ENCODE measurements at regions of chr10 and their contacts with region 1.

Region 1: DNA sequence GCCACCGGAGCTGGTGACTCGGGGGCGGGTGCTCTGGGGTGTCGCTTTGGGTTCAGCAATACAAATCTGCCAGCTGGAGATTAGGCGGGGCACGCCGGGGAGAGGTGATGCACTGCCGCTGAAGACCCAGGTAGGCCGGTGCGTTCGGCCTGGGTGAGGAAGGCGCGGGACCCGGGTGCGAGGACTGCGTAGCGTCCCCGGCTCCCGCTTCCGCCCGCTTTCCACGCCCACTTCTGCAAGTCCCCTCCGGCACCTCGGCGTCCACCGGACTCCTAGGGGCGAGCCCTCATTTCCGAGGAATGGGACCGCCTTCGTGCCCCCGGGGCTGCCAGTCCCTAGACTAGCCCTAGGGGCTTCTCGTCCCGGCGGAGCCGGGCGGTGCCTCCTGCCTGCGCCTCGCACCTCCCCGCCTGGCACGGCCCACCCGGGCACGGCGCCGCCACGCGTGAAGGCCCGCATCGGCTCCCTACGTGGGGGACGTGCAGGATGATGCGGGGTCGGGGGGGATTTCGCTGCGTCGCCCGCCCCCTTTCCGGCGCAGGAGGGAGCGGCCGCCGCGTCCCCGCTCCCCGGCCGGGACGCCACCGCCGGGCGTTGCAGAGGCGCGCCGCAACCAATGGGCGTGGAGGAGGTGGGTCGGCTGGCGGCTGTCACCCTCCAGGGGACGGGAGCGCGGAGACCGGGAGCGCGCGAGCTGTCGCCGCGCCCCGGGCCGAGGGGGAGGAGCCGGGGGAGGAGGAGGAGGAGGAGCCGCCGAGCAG is 40.0 kb downstream of the HK1 start:
- DNase-seq: peak; percentile 93
- ATAC-seq: peak; percentile 89
- H3K4me3 Mint-ChIP-seq: peak overlapping the region; percentile 99
- H3K27ac Mint-ChIP-seq: peak overlapping the region; percentile 95
- H3K4me1 Mint-ChIP-seq: peaks cover 53% of the 10 kb centered on the region
- H3K27me3 Mint-ChIP-seq: no peaks in the 10 kb centered on the region

Region 2: GRCh38 chr10:69237528-69238159 is 80.6 kb before region 1 on chr10:
- CTCF ChIA-PET with region 1: interaction called, 10 read pairs
- POLR2A ChIA-PET with region 1: no interaction called
- DNase-seq: peak; percentile 91
- ATAC-seq: peak; percentile 98
- H3K4me3 Mint-ChIP-seq: no peak overlapping the region
- H3K27ac Mint-ChIP-seq: no peak overlapping the region
- H3K4me1 Mint-ChIP-seq: peaks cover 42% of the 10 kb centered on the region
- H3K27me3 Mint-ChIP-seq: no peaks in the 10 kb centered on the region

Region 3: GRCh38 chr10:69344591-69345252 is 26.4 kb after region 1 on chr10:
- CTCF ChIA-PET with region 1: interaction called, 6 read pairs
- POLR2A ChIA-PET with region 1: interaction called, 23 read pairs
- DNase-seq: peak; percentile 58
- ATAC-seq: peak; percentile 81
- H3K4me3 Mint-ChIP-seq: peak overlapping the region; percentile 52
- H3K27ac Mint-ChIP-seq: peak overlapping the region; percentile 95
- H3K4me1 Mint-ChIP-seq: peaks cover 85% of the 10 kb centered on the region
- H3K27me3 Mint-ChIP-seq: no peaks in the 10 kb centered on the region

Region 4: GRCh38 chr10:69494626-69495558 is 176.6 kb after region 1 on chr10:
- CTCF ChIA-PET with region 1: no interaction called
- POLR2A ChIA-PET with region 1: no interaction called
- DNase-seq: no peak
- ATAC-seq: no peak
- H3K4me3 Mint-ChIP-seq: no peak overlapping the region
- H3K27ac Mint-ChIP-seq: no peak overlapping the region
- H3K4me1 Mint-ChIP-seq: peaks cover 8% of the 10 kb centered on the region
- H3K27me3 Mint-ChIP-seq: no peaks in the 10 kb centered on the region

Measured in activated CD8-positive, alpha-beta T cell treated with anti-CD3 and anti-CD28 coated beads, Interleukin-2, amount 10 ng/mL, durations not matched to agents 7 days and 5 days (primary cell).